ENCODE measurements at regions of chr17 and their contacts with region 1.

Region 1: DNA sequence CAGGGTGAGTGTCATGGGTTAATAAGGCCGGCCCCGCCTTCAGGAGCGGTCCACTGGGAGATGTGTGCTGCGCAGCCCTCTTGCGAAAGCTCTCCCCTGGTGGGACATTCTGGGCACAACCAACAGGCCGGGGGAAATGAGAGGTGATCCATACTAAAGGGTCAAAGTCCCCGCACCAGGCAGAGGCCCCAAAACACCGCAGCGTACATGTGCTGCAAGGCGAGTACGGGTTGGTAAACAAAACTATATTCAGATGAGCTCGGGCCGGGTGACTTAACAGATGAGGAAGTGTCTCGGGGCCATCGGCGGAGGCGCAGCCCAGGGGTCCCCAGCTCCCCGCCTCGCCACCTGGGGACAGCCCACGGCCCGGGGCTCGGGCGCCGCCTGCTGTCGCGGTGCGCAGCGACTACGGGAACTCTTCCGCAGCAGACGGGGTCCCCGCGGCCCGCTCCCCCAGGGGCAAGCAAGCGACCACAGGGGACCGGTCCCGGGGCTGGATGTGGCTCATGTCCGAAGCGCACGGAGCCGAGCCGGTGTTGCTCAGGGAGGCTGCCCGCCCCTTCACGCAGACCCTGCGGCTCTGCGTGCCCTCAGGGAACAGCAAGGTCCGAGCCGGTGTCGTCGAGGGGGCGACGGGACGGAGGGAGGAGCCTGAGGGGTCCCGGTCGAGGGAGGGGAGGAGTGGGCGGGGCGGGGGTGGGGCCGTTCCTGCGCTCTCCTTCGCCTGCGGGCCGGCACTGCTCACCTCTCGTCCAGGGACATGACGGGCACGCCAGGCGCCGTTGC is at the start of gene RAB37:
- DNase-seq: peak; percentile 39
- H3K4me3 Mint-ChIP-seq: peak within 1 kb of the TSS; percentile 83
- H3K27ac Mint-ChIP-seq: peak within 1 kb of the TSS; percentile 91
- H3K4me1 Mint-ChIP-seq: peaks cover 55% of the 10 kb centered on the region
- H3K27me3 Mint-ChIP-seq: peaks cover 18% of the 10 kb centered on the region
- total RNA-seq, gene RAB37: 28.2 to 30.4 TPM

Region 2: DNA sequence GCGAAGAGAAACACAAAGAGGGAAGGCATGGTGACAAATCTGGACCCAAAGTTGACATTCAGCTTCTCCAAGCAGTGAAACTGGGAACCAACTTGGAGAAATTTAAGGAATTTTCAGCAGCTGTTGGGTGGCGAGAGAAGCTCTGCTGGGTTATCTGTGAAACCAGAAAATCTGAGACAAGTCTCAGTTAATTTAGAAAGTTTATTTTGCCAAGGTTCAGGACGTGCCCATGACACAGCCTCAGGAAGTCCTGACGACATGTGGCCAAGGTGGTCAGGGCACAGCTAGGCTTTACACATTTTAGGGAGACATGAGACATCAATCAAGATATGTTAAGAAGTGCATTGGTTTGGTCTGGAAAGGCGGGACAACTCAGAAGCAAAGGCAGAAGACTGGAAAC is 12.8 kb before region 1 on chr17:
- CTCF ChIA-PET with region 1: interaction called, 13 read pairs
- POLR2A ChIA-PET with region 1: no interaction called
- DNase-seq: no peak
- H3K4me3 Mint-ChIP-seq: no peak overlapping the region
- H3K27ac Mint-ChIP-seq: no peak overlapping the region
- H3K4me1 Mint-ChIP-seq: peaks cover 9% of the 10 kb centered on the region
- H3K27me3 Mint-ChIP-seq: peaks cover 25% of the 10 kb centered on the region

Region 3: GRCh38 chr17:74776044-74776977 is 39.6 kb after region 1 on chr17 and contains the start of gene NAT9:
- CTCF ChIA-PET with region 1: interaction called, 17 read pairs
- POLR2A ChIA-PET with region 1: no interaction called
- DNase-seq: peak; percentile 98
- H3K4me3 Mint-ChIP-seq: peak within 1 kb of the TSS; percentile 98
- H3K27ac Mint-ChIP-seq: peak within 1 kb of the TSS; percentile 90
- H3K4me1 Mint-ChIP-seq: peaks cover 74% of the 10 kb centered on the region
- H3K27me3 Mint-ChIP-seq: no peaks in the 10 kb centered on the region
- total RNA-seq, gene NAT9: 28.6 to 34.4 TPM